ENCODE measurements at regions of chr16 and their contacts with region 1.

Region 1: GRCh38 chr16:85821441-85822135 is 22.1 kb downstream of the COX4I1 start:
- DNase-seq: peak; percentile 76 to 92
- ATAC-seq: peak; percentile 87 to 92
- H3K4me3 ChIP-seq: no peak overlapping the region
- H3K27ac ChIP-seq: no peak overlapping the region
- H3K4me1 ChIP-seq: no peaks in the 10 kb centered on the region
- CTCF ChIP-seq: peak; percentile 94
- EP300 ChIP-seq: no peak
- POLR2A ChIP-seq: no peak
- RAD21 ChIP-seq: peak; percentile 98 to 99

Region 2: GRCh38 chr16:85853547-85854545 is 32.3 kb after region 1 on chr16:
- CTCF ChIA-PET with region 1: interaction called, 27 read pairs
- POLR2A ChIA-PET with region 1: no interaction called
- DNase-seq: no peak
- ATAC-seq: no peak
- H3K4me3 ChIP-seq: no peak overlapping the region
- H3K27ac ChIP-seq: no peak overlapping the region
- H3K4me1 ChIP-seq: no peaks in the 10 kb centered on the region
- CTCF ChIP-seq: no peak
- EP300 ChIP-seq: no peak
- POLR2A ChIP-seq: no peak
- RAD21 ChIP-seq: no peak

Region 3: GRCh38 chr16:85943711-85944110 is 122.1 kb after region 1 on chr16:
- CTCF ChIA-PET with region 1: interaction called, 10 read pairs
- POLR2A ChIA-PET with region 1: no interaction called
- DNase-seq: no peak
- ATAC-seq: no peak
- H3K4me3 ChIP-seq: no peak overlapping the region
- H3K27ac ChIP-seq: no peak overlapping the region
- H3K4me1 ChIP-seq: peaks cover 10% of the 10 kb centered on the region
- CTCF ChIP-seq: no peak
- EP300 ChIP-seq: no peak
- POLR2A ChIP-seq: no peak
- RAD21 ChIP-seq: no peak

Region 4: DNA sequence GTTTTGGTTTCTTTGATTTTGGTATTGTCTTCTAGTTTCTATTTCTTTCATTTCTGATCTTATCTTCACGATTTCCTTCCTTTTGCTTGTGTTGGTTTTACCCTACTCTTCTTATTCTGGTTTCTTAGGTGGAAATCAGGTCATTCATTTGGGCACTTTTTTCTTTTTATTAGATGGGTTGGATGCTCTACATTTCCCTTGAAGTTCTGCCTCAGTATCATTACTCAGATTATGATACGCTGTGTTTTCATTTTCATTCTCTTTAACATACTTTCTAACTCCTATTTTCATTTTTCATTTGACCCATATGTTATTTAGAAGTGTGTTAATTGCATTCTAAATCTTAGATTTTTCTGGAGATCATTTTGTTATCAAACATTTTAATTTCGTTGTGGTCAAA is 185.9 kb after region 1 on chr16:
- CTCF ChIA-PET with region 1: interaction called, 405 read pairs
- POLR2A ChIA-PET with region 1: no interaction called
- DNase-seq: no peak
- ATAC-seq: no peak
- H3K4me3 ChIP-seq: no peak overlapping the region
- H3K27ac ChIP-seq: no peak overlapping the region
- H3K4me1 ChIP-seq: no peaks in the 10 kb centered on the region
- CTCF ChIP-seq: no peak
- EP300 ChIP-seq: no peak
- POLR2A ChIP-seq: no peak
- RAD21 ChIP-seq: no peak

Region 5: DNA sequence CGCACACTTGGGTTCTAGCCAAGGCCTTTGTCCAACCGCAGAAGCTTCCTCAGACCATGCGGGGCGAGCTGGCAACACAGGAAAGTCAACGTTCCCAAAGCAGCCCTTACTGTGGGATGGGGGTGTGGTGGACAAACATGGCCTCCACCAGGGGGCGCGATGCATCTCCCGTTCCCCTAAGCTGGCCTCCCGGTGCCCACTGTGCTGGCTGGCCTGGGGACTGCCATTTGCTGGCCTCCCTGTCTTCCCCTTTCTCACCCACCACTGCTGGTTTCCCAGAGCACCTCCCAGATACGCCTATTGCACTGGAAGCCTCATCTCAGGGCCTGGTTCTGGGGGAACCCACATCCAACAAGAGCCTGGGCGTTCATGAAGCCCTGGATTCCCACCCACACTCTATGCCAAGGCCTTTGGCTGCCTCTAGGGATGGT is 222.7 kb after region 1 on chr16:
- CTCF ChIA-PET with region 1: interaction called, 27 read pairs
- POLR2A ChIA-PET with region 1: no interaction called
- DNase-seq: peak; percentile 57 to 78
- ATAC-seq: peak in 1 of 2 experiments; percentile 93; a peak in 3 of 6 replicates
- H3K4me3 ChIP-seq: no peak overlapping the region
- H3K27ac ChIP-seq: no peak overlapping the region
- H3K4me1 ChIP-seq: no peaks in the 10 kb centered on the region
- CTCF ChIP-seq: peak; percentile 32; the same call in 2 of the 3 replicates
- EP300 ChIP-seq: no peak
- POLR2A ChIP-seq: no peak
- RAD21 ChIP-seq: peak in 1 of 2 experiments; percentile 44; a peak in 2 of 5 replicates